PC-9 (cell line): ENCODE measurements at regions of chr5 and their contacts with region 1.

Region 1: GRCh38 chr5:58182287-58182841 is 277.5 kb downstream of the PLK2 start:
- DNase-seq: no peak
- H3K4me3 ChIP-seq: no peak overlapping the region
- H3K27ac ChIP-seq: 0 out of 2 replicates have a peak overlapping the region, but pooled peaks have one; percentile 5
- H3K4me1 ChIP-seq: peaks cover 30% of the 10 kb centered on the region
- H3K27me3 ChIP-seq: no peaks in the 10 kb centered on the region
- CTCF ChIP-seq: no peak

Region 2: DNA sequence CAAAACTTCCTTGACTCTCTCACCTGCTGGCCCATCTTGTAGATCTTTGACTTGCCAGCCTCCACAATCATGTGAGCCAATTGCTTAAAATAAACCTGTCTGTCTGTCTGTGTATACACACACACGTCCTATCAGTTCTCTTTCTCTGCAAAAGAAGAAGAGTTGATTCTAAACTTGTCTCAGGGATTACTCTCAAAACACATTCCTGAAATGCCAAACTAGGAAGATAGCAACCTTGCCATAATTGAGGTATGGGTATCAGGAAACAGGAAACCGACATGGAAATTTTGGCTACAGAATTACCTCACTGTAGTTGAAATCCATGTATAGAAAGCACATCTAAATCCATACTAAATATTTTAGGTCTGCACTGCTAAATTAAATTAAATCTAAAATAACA is 205.9 kb before region 1 on chr5:
- CTCF ChIA-PET with region 1: no interaction called
- POLR2A ChIA-PET with region 1: no interaction called
- intact Hi-C with region 1: no loop called
- DNase-seq: no peak
- H3K4me3 ChIP-seq: no peak overlapping the region
- H3K27ac ChIP-seq: no peak overlapping the region
- H3K4me1 ChIP-seq: no peaks in the 10 kb centered on the region
- H3K27me3 ChIP-seq: no peaks in the 10 kb centered on the region
- CTCF ChIP-seq: no peak

Region 3: GRCh38 chr5:58165152-58165551 is 17.2 kb before region 1 on chr5:
- CTCF ChIA-PET with region 1: no interaction called
- POLR2A ChIA-PET with region 1: interaction called, 13 read pairs
- intact Hi-C with region 1: no loop called
- DNase-seq: no peak
- H3K4me3 ChIP-seq: no peak overlapping the region
- H3K27ac ChIP-seq: no peak overlapping the region
- H3K4me1 ChIP-seq: no peaks in the 10 kb centered on the region
- H3K27me3 ChIP-seq: no peaks in the 10 kb centered on the region
- CTCF ChIP-seq: no peak

Region 4: DNA sequence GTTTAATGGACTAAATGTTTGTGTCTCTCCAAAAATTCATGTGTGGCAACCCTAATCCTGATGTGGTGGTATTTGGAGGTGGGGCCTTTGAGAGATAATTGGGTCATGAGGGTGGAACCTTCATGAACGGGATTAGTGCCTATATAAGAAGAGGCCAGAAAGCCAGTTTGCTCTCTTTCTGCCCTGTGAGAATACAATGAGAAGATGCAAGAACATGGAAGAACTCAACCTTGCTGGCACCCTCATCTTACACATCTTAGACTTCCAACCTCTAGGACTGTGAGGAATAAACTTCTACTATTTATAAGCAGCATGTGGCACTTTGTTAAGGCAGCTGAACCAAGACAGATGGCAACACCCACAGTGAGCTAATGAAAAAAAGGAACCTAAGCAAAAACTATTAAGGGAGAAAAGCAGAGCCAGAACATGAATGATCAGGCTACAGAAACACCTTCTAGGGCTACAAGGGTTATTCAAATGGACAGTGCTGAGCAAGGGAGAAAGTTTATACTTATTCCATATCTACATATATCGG is 118.1 kb after region 1 on chr5:
- CTCF ChIA-PET with region 1: no interaction called
- POLR2A ChIA-PET with region 1: interaction called, 16 read pairs
- intact Hi-C with region 1: no loop called
- DNase-seq: no peak
- H3K4me3 ChIP-seq: no peak overlapping the region
- H3K27ac ChIP-seq: no peak overlapping the region
- H3K4me1 ChIP-seq: no peaks in the 10 kb centered on the region
- H3K27me3 ChIP-seq: no peaks in the 10 kb centered on the region
- CTCF ChIP-seq: no peak

Region 5: GRCh38 chr5:58311519-58311918 is 129.2 kb after region 1 on chr5:
- CTCF ChIA-PET with region 1: no interaction called
- POLR2A ChIA-PET with region 1: interaction called, 15 read pairs
- intact Hi-C with region 1: no loop called
- DNase-seq: no peak
- H3K4me3 ChIP-seq: no peak overlapping the region
- H3K27ac ChIP-seq: no peak overlapping the region
- H3K4me1 ChIP-seq: no peaks in the 10 kb centered on the region
- H3K27me3 ChIP-seq: no peaks in the 10 kb centered on the region
- CTCF ChIP-seq: no peak